ENCODE measurements at regions of chr12 and their contacts with region 1.

Region 1: DNA sequence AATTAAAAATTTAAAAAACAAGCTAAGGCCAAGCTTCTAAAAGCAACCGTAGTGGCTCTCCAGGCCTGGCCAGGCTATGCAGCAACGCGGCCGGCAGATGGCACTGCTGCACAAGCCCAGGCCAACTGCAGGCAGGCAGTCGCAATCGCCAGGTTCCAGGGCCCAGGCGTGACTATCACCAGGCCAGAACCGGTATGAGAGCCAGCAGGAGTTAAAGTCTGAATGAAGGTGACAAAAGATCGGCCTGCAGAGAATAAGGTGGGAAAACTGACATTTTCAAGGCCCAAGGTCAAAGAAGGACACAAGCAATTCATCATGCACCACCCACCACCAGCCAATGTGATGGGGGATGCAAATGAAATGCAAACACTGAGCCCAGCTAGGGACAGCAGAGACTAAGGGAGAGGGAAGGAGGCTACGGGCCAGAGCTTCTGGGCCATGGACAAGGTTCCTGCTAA is 43.6 kb upstream of the ANO2 start:
- DNase-seq: peak; percentile 24 to 79 (median 59)
- ATAC-seq: peak; percentile 81 to 89 (median 86)
- H3K4me3 ChIP-seq: no peak overlapping the region
- H3K4me3 Mint-ChIP-seq: no peak overlapping the region
- H3K27ac ChIP-seq: no peak overlapping the region
- H3K27ac Mint-ChIP-seq: no peak overlapping the region
- H3K4me1 ChIP-seq: no peaks in the 10 kb centered on the region
- H3K4me1 Mint-ChIP-seq: no peaks in the 10 kb centered on the region
- H3K27me3 ChIP-seq: peaks cover 0 to 5% of the 10 kb centered on the region in 2 experiments
- H3K27me3 Mint-ChIP-seq: peaks cover 0 to 1% of the 10 kb centered on the region in 2 donors

Region 2: GRCh38 chr12:6039894-6040568 is 51.3 kb after region 1 on chr12:
- CTCF ChIA-PET with region 1: interaction called, 27 to 44 read pairs
- POLR2A ChIA-PET with region 1: no interaction called
- DNase-seq: peak in 26 of 35 experiments; percentile 5 to 76 (median 30)
- ATAC-seq: peak; percentile 73 to 84 (median 78)
- H3K4me3 ChIP-seq: no peak overlapping the region
- H3K4me3 Mint-ChIP-seq: no peak overlapping the region
- H3K27ac ChIP-seq: no peak overlapping the region
- H3K27ac Mint-ChIP-seq: no peak overlapping the region
- H3K4me1 ChIP-seq: peaks cover 0 to 6% of the 10 kb centered on the region in 2 experiments
- H3K4me1 Mint-ChIP-seq: peaks cover 2 to 5% (median 2%) of the 10 kb centered on the region in 3 donors
- H3K27me3 ChIP-seq: peaks cover 0 to 22% of the 10 kb centered on the region in 2 experiments
- H3K27me3 Mint-ChIP-seq: peaks cover 2 to 4% of the 10 kb centered on the region in 2 donors

Region 3: GRCh38 chr12:7339675-7340074 is 1351.0 kb after region 1 on chr12:
- CTCF ChIA-PET with region 1: no interaction called
- POLR2A ChIA-PET with region 1: no interaction called
- DNase-seq: no peak
- ATAC-seq: peak in 1 of 4 experiments; percentile 82
- H3K4me3 ChIP-seq: no peak overlapping the region
- H3K4me3 Mint-ChIP-seq: no peak overlapping the region
- H3K27ac ChIP-seq: no peak overlapping the region
- H3K27ac Mint-ChIP-seq: peak overlapping the region in 1 of 2 donors; percentile 0
- H3K4me1 ChIP-seq: peaks cover 0 to 6% of the 10 kb centered on the region in 2 experiments
- H3K4me1 Mint-ChIP-seq: peaks cover 7 to 20% (median 9%) of the 10 kb centered on the region in 3 donors
- H3K27me3 ChIP-seq: no peaks in the 10 kb centered on the region
- H3K27me3 Mint-ChIP-seq: no peaks in the 10 kb centered on the region